Breast epithelium (tissue), 4 donors: ENCODE measurements at regions of chrX and their contacts with region 1.

Region 1: GRCh38 chrX:31546130-31546529 is 474.3 kb upstream of the FTHL17 start:
- DNase-seq: no peak
- H3K4me3 ChIP-seq: no peak overlapping the region
- H3K27ac ChIP-seq: no peak overlapping the region
- H3K4me1 ChIP-seq: no peaks in the 10 kb centered on the region
- H3K27me3 ChIP-seq: peaks cover 0 to 4% of the 10 kb centered on the region in 2 donors
- CTCF ChIP-seq: no peak
- POLR2A ChIP-seq: no peak

Region 2: GRCh38 chrX:31057291-31057690 is 488.8 kb before region 1 on chrX:
- intact Hi-C with region 1: no loop called
- DNase-seq: no peak
- H3K4me3 ChIP-seq: no peak overlapping the region
- H3K27ac ChIP-seq: no peak overlapping the region
- H3K4me1 ChIP-seq: no peaks in the 10 kb centered on the region
- H3K27me3 ChIP-seq: peaks cover 0 to 7% of the 10 kb centered on the region in 2 donors
- CTCF ChIP-seq: no peak
- POLR2A ChIP-seq: no peak

Region 3: GRCh38 chrX:31449965-31450364 is 96.2 kb before region 1 on chrX:
- intact Hi-C with region 1: no loop called
- DNase-seq: no peak
- H3K4me3 ChIP-seq: no peak overlapping the region
- H3K27ac ChIP-seq: no peak overlapping the region
- H3K4me1 ChIP-seq: no peaks in the 10 kb centered on the region
- H3K27me3 ChIP-seq: peaks cover 0 to 3% of the 10 kb centered on the region in 2 donors
- CTCF ChIP-seq: no peak
- POLR2A ChIP-seq: no peak

Region 4: GRCh38 chrX:31508338-31508737 is 37.8 kb before region 1 on chrX:
- intact Hi-C with region 1: no loop called
- DNase-seq: peak in 1 of 2 donors; percentile 25
- H3K4me3 ChIP-seq: no peak overlapping the region
- H3K27ac ChIP-seq: peak overlapping the region; percentile 50 to 52
- H3K4me1 ChIP-seq: no peaks in the 10 kb centered on the region
- H3K27me3 ChIP-seq: peaks cover 0 to 2% of the 10 kb centered on the region in 2 donors
- CTCF ChIP-seq: no peak
- POLR2A ChIP-seq: no peak

Region 5: GRCh38 chrX:31934842-31935241 is 388.7 kb after region 1 on chrX:
- intact Hi-C with region 1: loop called (anchors 5 kb)
- DNase-seq: no peak
- H3K4me3 ChIP-seq: no peak overlapping the region
- H3K27ac ChIP-seq: no peak overlapping the region
- H3K4me1 ChIP-seq: no peaks in the 10 kb centered on the region
- H3K27me3 ChIP-seq: peaks cover 0 to 4% of the 10 kb centered on the region in 2 donors
- CTCF ChIP-seq: no peak
- POLR2A ChIP-seq: no peak